AG04449 (cell line): ENCODE measurements at regions of chr2 and their contacts with region 1.

Region 1: DNA sequence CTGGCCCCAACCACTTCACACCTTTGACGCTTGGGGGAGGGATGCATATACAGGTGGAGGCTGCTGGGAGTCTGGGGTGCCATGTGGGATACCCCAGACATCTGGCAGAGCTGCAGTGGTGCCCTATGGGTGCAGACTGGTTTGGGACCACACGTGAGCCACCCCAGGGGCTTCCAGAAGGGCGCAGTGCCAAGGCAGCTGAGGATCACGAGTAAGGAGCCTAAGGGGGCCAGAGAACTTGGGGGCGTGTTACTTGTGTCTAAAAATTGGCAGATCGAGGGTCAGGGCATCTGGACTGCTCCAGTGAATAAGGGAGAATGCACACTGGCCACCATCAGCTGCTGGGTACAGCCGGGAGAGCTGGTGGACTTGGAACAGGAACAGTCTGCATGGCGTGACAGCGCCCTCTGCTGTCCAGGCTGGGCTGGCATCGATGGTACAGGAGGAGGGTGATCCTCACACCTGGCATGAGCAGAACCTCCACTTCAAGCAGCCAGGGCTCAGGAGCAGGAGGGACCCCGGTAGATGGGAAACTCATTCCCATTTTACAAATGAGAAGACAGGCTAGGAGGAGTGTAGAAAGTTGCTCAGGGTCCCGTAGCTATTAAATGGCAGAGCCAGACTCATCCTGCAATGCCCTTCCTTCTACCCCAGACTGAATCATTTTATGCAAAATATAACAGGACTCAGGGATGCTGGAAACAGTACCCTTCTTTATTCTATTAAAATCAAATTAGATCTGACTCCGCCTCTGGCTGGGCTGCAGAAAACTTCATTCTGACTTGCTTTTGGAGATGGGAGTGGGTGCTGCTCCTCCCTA is 60.4 kb downstream of the ATOH8 start:
- DNase-seq: peak; percentile 34
- H3K4me3 ChIP-seq: no peak overlapping the region
- CTCF ChIP-seq: peak; percentile 100

Region 2: DNA sequence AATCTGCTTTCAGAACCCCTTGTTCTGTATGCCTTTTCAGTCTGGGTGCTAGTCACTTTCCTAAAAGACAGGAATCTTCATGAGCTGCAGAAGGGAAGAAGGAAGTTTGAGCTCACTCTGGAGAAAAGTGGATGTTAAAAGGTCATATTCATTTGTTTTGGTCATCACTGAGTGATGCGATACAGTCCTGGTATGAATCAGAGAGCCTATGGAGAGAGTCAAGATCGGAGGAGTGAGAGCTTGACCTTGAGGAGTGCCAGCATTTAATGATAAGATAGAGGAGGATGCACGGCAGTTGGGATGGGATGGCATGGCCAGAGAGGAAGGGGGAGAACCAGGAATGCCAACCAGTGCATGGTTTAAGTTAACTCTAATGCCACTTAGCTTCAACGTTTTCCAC is 178.6 kb before region 1 on chr2:
- CTCF ChIA-PET with region 1: interaction called, 121 read pairs
- POLR2A ChIA-PET with region 1: no interaction called
- DNase-seq: no peak
- H3K4me3 ChIP-seq: no peak overlapping the region
- CTCF ChIP-seq: no peak

Region 3: DNA sequence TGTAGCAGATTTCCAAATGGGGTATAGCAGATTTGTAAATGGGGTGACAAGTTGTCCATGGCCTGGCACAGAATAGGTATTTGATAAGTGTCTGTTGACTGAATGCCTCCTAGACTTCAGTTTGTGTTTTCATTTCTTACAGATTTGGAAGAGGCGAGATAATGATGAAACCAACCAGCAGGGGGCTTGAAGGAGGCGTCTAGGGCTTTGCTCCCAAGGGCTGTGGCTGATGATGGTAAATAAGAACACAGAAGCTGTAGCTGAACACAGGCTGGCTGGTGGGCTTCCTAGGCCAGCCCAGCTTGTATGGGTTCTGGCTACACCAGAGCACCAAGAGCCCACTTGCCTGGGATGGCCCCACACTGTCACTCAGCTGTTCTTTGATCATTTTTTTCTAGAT is 165.6 kb before region 1 on chr2:
- CTCF ChIA-PET with region 1: interaction called, 65 read pairs
- POLR2A ChIA-PET with region 1: no interaction called
- DNase-seq: no peak
- H3K4me3 ChIP-seq: no peak overlapping the region
- CTCF ChIP-seq: peak; percentile 65

Region 4: GRCh38 chr2:85707304-85707703 is 106.9 kb before region 1 on chr2:
- CTCF ChIA-PET with region 1: interaction called, 51 read pairs
- POLR2A ChIA-PET with region 1: no interaction called
- DNase-seq: no peak
- H3K4me3 ChIP-seq: no peak overlapping the region
- CTCF ChIP-seq: peak; percentile 76

Region 5: GRCh38 chr2:85728883-85729824 is 85.0 kb before region 1 on chr2:
- CTCF ChIA-PET with region 1: interaction called, 643 read pairs
- POLR2A ChIA-PET with region 1: interaction called, 6 read pairs
- DNase-seq: no peak
- H3K4me3 ChIP-seq: no peak overlapping the region
- CTCF ChIP-seq: peak; percentile 98

Region 6: GRCh38 chr2:85760371-85760770 is 53.8 kb before region 1 on chr2:
- CTCF ChIA-PET with region 1: interaction called, 12 read pairs
- POLR2A ChIA-PET with region 1: no interaction called
- DNase-seq: no peak
- H3K4me3 ChIP-seq: no peak overlapping the region
- CTCF ChIP-seq: no peak